Prostate gland (tissue), 2 donors: ENCODE measurements at regions of chr9 and their contacts with region 1.

Region 1: GRCh38 chr9:4679268-4680172 is at the start of gene CDC37L1:
- DNase-seq: peak; percentile 98
- H3K4me3 ChIP-seq: peak within 1 kb of the TSS; percentile 54 to 92
- H3K27ac ChIP-seq: peak within 1 kb of the TSS; percentile 94 to 98
- H3K4me1 ChIP-seq: no peaks in the 10 kb centered on the region
- H3K27me3 ChIP-seq: no peaks in the 10 kb centered on the region
- CTCF ChIP-seq: peak; percentile 27 to 88 (median 70)
- POLR2A ChIP-seq: peak; percentile 99
- total RNA-seq, gene CDC37L1: 29.2 to 37.7 TPM

Region 2: GRCh38 chr9:5437254-5438216 is 758.0 kb after region 1 on chr9 and contains the start of gene PLGRKT:
- intact Hi-C with region 1: no loop called
- DNase-seq: peak; percentile 93
- H3K4me3 ChIP-seq: peak within 1 kb of the TSS; percentile 61 to 71
- H3K27ac ChIP-seq: peak within 1 kb of the TSS; percentile 87 to 88
- H3K4me1 ChIP-seq: peaks cover 2% of the 10 kb centered on the region
- H3K27me3 ChIP-seq: no peaks in the 10 kb centered on the region
- CTCF ChIP-seq: peak in 1 of 4 experiments; percentile 34
- POLR2A ChIP-seq: peak; percentile 84
- total RNA-seq, gene PLGRKT: 10.4 to 49.6 TPM

Region 3: GRCh38 chr9:5628530-5629311 is 949.2 kb after region 1 on chr9 and contains the start of gene RIC1:
- intact Hi-C with region 1: loop called (anchors 10 kb)
- DNase-seq: peak; percentile 87
- H3K4me3 ChIP-seq: peak within 1 kb of the TSS; percentile 90 to 99
- H3K27ac ChIP-seq: peak within 1 kb of the TSS; percentile 92 to 98
- H3K4me1 ChIP-seq: peaks cover 2% of the 10 kb centered on the region
- H3K27me3 ChIP-seq: no peaks in the 10 kb centered on the region
- CTCF ChIP-seq: peak in 2 of 4 experiments; percentile 38 to 46
- POLR2A ChIP-seq: peak; percentile 97
- total RNA-seq, gene RIC1: 18.0 to 49.8 TPM